Activated B cell treated with CpG ODN at 0.5 μM for 24 hours (primary cell): ENCODE measurements at regions of chr2 and their contacts with region 1.

Region 1: GRCh38 chr2:181891966-181892798 is 652 bp downstream of the ITPRID2 start:
- DNase-seq: peak; percentile 63
- ATAC-seq: peak; percentile 49
- H3K4me3 Mint-ChIP-seq: peak overlapping the region; percentile 92
- H3K27ac Mint-ChIP-seq: peak overlapping the region; percentile 65
- H3K4me1 Mint-ChIP-seq: peaks cover 25% of the 10 kb centered on the region
- H3K27me3 Mint-ChIP-seq: peaks cover 9% of the 10 kb centered on the region
- CTCF ChIP-seq: no peak

Region 2: GRCh38 chr2:180006781-180007579 is 1885.2 kb before region 1 on chr2 and contains the start of gene CWC22:
- CTCF ChIA-PET with region 1: no interaction called
- POLR2A ChIA-PET with region 1: no interaction called
- intact Hi-C with region 1: loop called (anchors 5 kb)
- DNase-seq: peak; percentile 75
- ATAC-seq: peak; percentile 93
- H3K4me3 Mint-ChIP-seq: peak within 1 kb of the TSS; percentile 93
- H3K27ac Mint-ChIP-seq: peak within 1 kb of the TSS; percentile 98
- H3K4me1 Mint-ChIP-seq: peaks cover 43% of the 10 kb centered on the region
- H3K27me3 Mint-ChIP-seq: no peaks in the 10 kb centered on the region
- CTCF ChIP-seq: no peak
- total RNA-seq, gene CWC22: 27.5 and 28.9 TPM in 2 replicates

Region 3: DNA sequence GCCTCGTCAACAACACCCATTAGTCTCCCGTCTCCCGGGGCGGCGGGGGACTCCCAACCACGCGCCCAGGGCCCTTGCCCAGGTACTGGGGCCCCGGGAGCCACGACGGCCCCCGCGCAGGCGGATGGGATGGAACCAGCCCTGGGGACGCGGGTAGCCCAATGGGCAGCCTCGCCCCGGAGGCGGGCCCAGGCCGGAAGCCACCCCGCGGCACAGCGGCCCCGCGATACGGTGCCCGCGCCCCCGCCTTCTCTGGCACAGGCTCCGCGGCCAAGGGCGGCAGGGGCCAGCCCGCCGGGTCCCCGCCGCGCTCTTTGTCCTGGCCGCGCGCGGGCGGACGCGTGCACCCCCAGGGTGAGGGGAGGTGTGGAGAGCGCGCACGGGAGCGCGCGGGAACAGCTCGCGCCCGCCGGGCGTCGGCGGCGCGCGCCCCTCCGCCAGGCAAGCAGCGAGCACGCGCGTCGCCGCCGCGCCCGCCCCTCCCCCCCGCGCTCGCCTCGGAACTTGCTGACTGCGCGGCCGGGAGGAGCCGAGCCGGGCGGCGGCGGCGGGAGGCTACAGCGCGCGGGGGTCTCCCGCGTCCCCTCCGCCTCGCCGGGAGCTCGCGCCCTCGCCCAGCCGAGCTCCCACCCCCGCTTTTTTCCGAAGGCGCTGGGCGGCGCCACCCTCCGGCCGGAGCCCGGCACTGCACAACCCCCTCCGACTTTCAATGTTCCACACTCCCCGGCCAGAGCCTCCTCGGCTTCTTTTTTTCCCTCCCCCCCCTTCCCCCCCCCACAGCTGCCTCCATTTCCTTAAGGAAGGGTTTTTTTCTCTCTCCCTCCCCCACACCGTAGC is 911.9 kb before region 1 on chr2 and contains the start of gene UBE2E3:
- CTCF ChIA-PET with region 1: no interaction called
- POLR2A ChIA-PET with region 1: no interaction called
- intact Hi-C with region 1: loop called (anchors 1 kb)
- DNase-seq: peak; percentile 79
- ATAC-seq: peak; percentile 80
- H3K4me3 Mint-ChIP-seq: peak within 1 kb of the TSS; percentile 93
- H3K27ac Mint-ChIP-seq: peak within 1 kb of the TSS; percentile 95
- H3K4me1 Mint-ChIP-seq: peaks cover 37% of the 10 kb centered on the region
- H3K27me3 Mint-ChIP-seq: no peaks in the 10 kb centered on the region
- CTCF ChIP-seq: no peak
- total RNA-seq, gene UBE2E3: 33.1 and 33.6 TPM in 2 replicates

Region 4: DNA sequence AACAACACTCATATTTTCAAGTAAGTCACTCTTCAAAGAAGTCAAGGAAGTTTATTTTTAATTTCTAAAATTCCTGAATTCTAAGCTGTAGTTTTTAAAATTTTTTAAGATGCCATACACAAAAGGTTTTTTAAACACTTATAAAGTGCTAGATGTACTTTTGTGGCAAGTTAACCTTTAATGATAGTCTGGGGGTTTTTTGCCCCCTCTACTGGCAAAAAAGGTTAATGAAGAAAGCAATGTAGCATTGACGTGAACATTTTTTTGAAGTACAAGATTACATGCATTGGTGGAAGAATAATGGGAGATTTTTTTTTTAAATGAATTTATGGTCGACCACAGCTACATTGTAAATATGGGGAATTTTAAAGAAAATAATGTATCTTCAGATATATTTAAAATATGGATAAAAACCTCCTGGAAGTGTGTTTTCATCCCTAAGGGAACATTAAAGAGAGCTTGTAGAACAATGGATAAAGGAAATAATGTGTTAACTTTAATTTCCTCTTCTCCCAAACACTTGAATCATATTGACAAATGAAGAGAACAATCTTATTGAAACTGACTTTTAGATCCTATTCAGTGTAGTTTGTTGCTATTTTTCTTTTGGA is 11.9 kb after region 1 on chr2:
- CTCF ChIA-PET with region 1: interaction called, 24 read pairs
- POLR2A ChIA-PET with region 1: interaction called, 4 read pairs
- intact Hi-C with region 1: loop called (anchors 1 kb)
- DNase-seq: no peak
- ATAC-seq: no peak
- H3K4me3 Mint-ChIP-seq: no peak overlapping the region
- H3K27ac Mint-ChIP-seq: no peak overlapping the region
- H3K4me1 Mint-ChIP-seq: peaks cover 6% of the 10 kb centered on the region
- H3K27me3 Mint-ChIP-seq: no peaks in the 10 kb centered on the region
- CTCF ChIP-seq: peak; percentile 29

Region 5: DNA sequence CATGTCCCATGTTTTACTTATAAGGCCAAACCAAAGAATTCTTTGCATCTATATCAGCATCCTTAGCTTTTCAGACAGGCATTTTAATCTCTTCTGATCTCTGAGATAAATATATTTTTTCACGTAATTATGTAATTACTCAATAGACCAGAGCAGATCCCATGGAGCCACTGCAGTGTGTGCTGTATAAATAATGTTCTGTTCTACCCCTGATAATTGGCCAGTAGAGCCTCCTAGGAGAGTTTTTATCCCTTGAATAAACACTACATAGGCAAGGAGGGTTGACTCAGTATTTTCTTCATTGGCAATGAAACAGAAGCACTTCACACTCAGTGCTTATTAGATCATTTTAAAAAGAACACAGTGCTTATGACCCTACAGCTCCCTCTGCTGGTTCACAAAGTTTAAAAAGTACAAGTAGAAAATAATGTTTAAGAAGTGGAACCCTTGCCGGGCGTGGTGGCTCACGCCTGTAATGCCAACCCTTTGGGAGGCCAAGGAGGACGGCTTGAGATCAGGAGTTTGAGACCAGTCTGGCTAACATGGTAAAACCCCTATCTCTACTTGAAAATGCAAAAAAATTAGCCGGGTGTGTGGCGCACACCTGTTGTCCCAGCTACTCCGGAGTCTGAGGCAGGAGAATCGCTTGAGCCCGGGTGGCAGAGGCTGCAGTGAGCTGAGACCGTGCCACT is 185.4 kb after region 1 on chr2:
- CTCF ChIA-PET with region 1: no interaction called
- POLR2A ChIA-PET with region 1: no interaction called
- intact Hi-C with region 1: loop called (anchors 5 kb)
- DNase-seq: no peak
- ATAC-seq: peak; percentile 25
- H3K4me3 Mint-ChIP-seq: no peak overlapping the region
- H3K27ac Mint-ChIP-seq: no peak overlapping the region
- H3K4me1 Mint-ChIP-seq: no peaks in the 10 kb centered on the region
- H3K27me3 Mint-ChIP-seq: peaks cover 3% of the 10 kb centered on the region
- CTCF ChIP-seq: no peak

Region 6: GRCh38 chr2:183038341-183039300 is 1146.4 kb after region 1 on chr2 and contains the start of gene NCKAP1:
- CTCF ChIA-PET with region 1: no interaction called
- POLR2A ChIA-PET with region 1: no interaction called
- intact Hi-C with region 1: loop called (anchors 10 kb)
- DNase-seq: peak; percentile 59
- ATAC-seq: peak; percentile 70
- H3K4me3 Mint-ChIP-seq: peak within 1 kb of the TSS; percentile 55
- H3K27ac Mint-ChIP-seq: no peak within 1 kb of the TSS
- H3K4me1 Mint-ChIP-seq: peaks cover 27% of the 10 kb centered on the region
- H3K27me3 Mint-ChIP-seq: peaks cover 41% of the 10 kb centered on the region
- CTCF ChIP-seq: no peak
- total RNA-seq, gene NCKAP1: 0.22 TPM in 1 of 2 replicates, not detected in the other